Dorsolateral prefrontal cortex (tissue), 120 donors: ENCODE measurements at regions of chr3 and their contacts with region 1.

Region 1: DNA sequence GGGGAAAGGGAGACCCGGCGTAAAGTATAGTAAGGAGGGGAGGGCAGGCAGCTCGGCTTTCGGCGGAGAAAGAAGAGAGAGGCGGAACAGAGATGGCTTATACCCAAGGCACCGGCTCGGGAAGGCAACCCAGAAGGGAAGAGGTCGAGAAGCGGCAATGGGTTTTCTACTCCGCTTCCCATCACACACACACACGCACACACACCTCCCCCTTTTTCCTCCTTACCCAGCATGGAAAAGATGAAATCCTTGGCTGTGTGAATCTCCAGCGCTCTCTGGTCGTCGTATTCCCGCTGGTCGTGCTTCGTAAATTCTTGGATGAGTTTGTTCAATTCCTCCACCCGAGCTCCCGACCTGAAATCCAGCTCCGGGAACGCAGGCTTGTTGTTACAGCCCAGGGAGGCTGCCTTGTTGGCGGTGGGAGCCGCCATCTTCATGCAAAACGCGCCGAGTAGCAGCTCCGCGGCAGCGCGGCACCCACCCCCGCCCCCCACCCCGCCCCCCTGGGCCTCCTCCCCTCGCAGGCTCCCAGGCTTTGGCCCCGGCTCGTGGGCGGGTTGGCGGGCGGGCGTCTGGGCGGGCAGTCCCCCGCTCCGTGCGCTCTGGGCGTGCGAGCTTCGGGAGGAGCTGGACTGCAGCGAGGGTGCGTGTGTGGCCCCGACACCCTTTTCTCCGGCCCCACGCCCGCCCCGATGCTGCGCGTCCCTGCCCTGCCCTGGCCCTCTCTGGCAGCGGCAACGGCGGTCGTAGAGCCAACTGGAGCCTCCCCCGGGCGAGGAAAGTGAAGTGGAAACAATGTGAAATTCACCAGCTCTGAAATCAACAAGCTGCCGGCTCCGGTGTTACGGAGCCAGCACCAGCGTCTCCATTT is at the start of gene MB21D2:
- DNase-seq: peak; percentile 38 to 81 (median 70)
- H3K4me3 ChIP-seq: peak within 1 kb of the TSS; percentile 54 to 97 (median 83)
- H3K27ac ChIP-seq: peak within 1 kb of the TSS; percentile 62 to 98 (median 95)
- H3K27me3 ChIP-seq: no peaks in the 10 kb centered on the region
- CTCF ChIP-seq: peak in 18 of 56 donors; percentile 7 to 48 (median 34)
- total RNA-seq, gene MB21D2: 3.8 to 14.3 (median 8.3) TPM

Region 2: GRCh38 chr3:192545333-192545732 is 372.3 kb before region 1 on chr3:
- intact Hi-C with region 1: no loop called
- DNase-seq: no peak
- H3K4me3 ChIP-seq: no peak overlapping the region
- H3K27ac ChIP-seq: no peak overlapping the region
- H3K27me3 ChIP-seq: peaks cover 0 to 2% (median 0%) of the 10 kb centered on the region in 45 donors
- CTCF ChIP-seq: no peak

Region 3: GRCh38 chr3:193040836-193041672 is 123.4 kb after region 1 on chr3:
- intact Hi-C with region 1: loop called in 1 of 2 experiments (anchors 10 kb)
- DNase-seq: no peak
- H3K4me3 ChIP-seq: no peak overlapping the region
- H3K27ac ChIP-seq: no peak overlapping the region
- H3K27me3 ChIP-seq: no peaks in the 10 kb centered on the region
- CTCF ChIP-seq: peak in 55 of 56 donors; percentile 10 to 80 (median 51)

Region 4: DNA sequence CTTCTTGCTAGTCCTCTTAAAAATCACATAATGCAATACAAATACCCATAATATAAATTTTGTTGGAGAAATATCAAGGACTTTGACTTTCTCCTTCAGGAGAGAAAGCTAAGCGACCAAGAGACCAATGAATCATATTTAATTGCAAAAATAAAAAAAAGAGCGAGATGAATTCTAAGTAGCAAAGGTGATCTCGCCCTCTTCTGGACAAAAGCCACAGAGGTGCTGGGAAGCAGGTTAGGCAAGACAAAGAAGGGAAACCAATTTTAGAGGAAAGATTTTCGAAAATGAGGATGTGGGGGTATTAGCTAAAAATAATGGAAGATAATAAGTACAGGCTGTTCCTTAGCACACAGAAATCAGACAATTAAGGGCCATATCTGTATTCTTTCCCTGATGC is 212.0 kb after region 1 on chr3:
- intact Hi-C with region 1: loop called in 1 of 2 experiments (anchors 5 kb)
- DNase-seq: no peak
- H3K4me3 ChIP-seq: no peak overlapping the region
- H3K27ac ChIP-seq: no peak overlapping the region
- H3K27me3 ChIP-seq: peaks cover 0 to 12% (median 0%) of the 10 kb centered on the region in 45 donors
- CTCF ChIP-seq: no peak

Region 5: DNA sequence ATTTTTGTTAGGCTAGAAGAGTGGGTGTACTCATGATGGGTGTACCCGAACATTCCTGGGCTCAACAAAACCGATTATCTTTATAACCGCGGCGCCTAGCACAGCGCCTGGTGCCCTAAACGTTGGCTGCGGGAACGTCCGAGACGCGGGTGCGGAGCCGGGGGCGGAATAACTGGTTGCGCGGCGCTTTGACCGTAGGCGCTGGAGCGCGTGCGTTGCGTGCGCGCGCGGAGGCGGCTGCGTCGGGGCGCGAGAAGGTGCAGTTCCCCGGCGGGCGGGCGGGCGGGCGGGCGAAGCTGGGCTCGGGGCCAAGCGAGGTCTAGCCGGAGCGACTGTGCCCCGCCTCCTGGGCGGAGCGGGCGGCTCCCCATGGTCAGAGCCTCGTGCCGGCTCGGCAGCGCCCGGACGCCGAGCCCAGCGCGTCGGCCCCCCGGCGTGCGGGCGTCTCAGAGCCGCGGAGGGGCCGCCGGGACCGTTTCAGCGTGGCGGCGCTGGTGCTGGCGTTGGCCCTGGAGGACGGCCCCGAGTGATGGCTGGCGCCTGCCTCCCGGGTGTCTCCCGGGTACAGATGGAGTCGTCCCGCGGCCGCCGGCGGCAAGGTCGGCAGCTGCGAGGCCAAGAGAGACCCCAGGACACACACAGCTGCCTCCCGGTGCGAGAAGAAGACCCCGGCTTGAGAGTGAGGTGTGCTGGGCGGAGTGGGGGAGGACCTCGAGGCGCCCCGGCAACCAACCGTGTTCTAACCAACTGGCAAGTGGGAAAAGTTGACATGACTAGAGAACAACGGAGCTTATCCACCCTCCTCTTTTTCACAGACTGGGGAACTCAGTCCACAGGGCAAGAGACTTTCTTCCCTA is 323.4 kb after region 1 on chr3 and contains the start of gene PLAAT1:
- intact Hi-C with region 1: loop called in 1 of 2 experiments (anchors 5 kb)
- DNase-seq: peak in 9 of 10 donors; percentile 26 to 72 (median 46)
- H3K4me3 ChIP-seq: peak within 1 kb of the TSS; percentile 40 to 77 (median 63)
- H3K27ac ChIP-seq: peak within 1 kb of the TSS in 46 of 59 donors; percentile 3 to 84 (median 64)
- H3K27me3 ChIP-seq: no peaks in the 10 kb centered on the region
- CTCF ChIP-seq: peak in 3 of 56 donors; percentile 10 to 16 (median 12)
- total RNA-seq, gene PLAAT1: 4.2 to 17.9 (median 9.0) TPM

Region 6: GRCh38 chr3:193592944-193593667 is 675.5 kb after region 1 on chr3 and contains the start of gene OPA1:
- intact Hi-C with region 1: loop called (anchors 5 kb)
- DNase-seq: peak; percentile 91 to 98 (median 96)
- H3K4me3 ChIP-seq: peak within 1 kb of the TSS; percentile 60 to 100 (median 93)
- H3K27ac ChIP-seq: peak within 1 kb of the TSS; percentile 38 to 96 (median 81)
- H3K27me3 ChIP-seq: no peaks in the 10 kb centered on the region
- CTCF ChIP-seq: peak in 52 of 56 donors; percentile 18 to 72 (median 42)
- total RNA-seq, gene OPA1: 66.6 to 180 (median 124) TPM